Right cardiac atrium (tissue), 5 donors: ENCODE measurements at regions of chrX and their contacts with region 1.

Region 1: DNA sequence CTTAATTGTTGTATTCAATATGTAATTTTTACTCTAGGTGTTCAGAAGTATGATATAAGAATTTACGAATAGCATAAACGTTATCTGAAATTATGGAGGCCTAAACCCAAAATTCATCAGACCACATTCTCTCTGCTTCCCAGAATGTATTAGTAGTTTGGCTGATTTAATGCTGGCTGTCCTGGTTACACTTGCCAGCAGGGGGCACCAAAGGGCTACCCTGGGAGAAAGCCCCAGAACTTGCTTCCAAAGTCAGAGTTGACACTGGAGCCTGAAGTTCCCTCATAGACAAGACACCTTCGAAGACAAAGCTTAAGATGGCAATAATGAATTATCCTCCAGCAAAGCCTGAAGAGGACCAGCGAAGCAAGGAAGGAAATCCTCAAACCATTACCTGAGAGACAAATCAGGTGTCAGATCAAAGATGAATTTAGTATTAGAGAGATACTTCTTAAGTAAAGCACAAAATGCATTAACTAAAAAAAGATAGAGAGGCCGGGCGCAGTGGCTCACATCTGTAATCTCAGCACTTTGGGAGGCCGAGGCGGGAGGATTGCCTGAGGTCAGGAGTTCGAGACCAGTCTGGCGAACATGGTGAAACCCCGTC is 11.3 kb upstream of the ANOS1 start:
- DNase-seq: peak; percentile 38 to 75 (median 74)
- ATAC-seq: no peak
- H3K4me3 ChIP-seq: no peak overlapping the region
- H3K27ac ChIP-seq: no peak overlapping the region
- H3K4me1 ChIP-seq: no peaks in the 10 kb centered on the region
- H3K27me3 ChIP-seq: no peaks in the 10 kb centered on the region

Region 2: GRCh38 chrX:7996414-7996813 is 746.8 kb before region 1 on chrX:
- intact Hi-C with region 1: loop called (anchors 5 to 10 kb)
- DNase-seq: no peak
- ATAC-seq: no peak
- H3K4me3 ChIP-seq: no peak overlapping the region
- H3K27ac ChIP-seq: no peak overlapping the region
- H3K4me1 ChIP-seq: peaks cover 1% of the 10 kb centered on the region
- H3K27me3 ChIP-seq: no peaks in the 10 kb centered on the region

Region 3: GRCh38 chrX:8364369-8365141 is 378.7 kb before region 1 on chrX:
- intact Hi-C with region 1: loop called in 1 of 4 experiments (anchors 10 kb)
- DNase-seq: peak in 2 of 3 donors; percentile 16 to 50
- ATAC-seq: no peak
- H3K4me3 ChIP-seq: no peak overlapping the region
- H3K27ac ChIP-seq: no peak overlapping the region
- H3K4me1 ChIP-seq: peaks cover 1% of the 10 kb centered on the region
- H3K27me3 ChIP-seq: no peaks in the 10 kb centered on the region

Region 4: DNA sequence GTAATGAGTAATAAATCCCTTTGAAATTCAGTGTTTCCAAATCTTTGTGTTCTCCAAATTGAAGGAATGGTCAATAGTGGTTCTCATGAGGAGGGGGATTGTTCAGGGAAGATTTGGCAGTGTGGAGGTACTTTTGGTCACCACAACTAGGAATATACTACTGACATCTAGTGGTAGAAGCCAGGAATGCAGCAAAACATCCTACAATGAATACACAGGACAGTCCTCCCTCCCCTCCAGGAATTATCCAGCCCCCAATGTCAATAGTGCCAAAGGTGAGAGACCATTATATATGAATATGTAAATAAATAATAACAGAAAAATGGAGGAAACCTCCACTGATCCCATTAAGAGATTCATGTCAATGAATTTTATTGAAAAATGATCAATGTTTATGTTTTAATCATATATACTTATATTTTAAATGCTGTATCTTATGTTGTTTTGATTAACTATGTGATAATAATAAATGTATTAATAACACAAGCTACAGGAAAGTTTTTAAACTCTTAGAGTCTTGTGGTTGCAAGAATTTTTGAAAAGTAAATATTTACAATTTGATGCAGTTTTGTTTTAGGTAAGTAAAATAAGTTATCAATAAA is 72.3 kb after region 1 on chrX:
- intact Hi-C with region 1: no loop called
- DNase-seq: no peak
- ATAC-seq: no peak
- H3K4me3 ChIP-seq: no peak overlapping the region
- H3K27ac ChIP-seq: no peak overlapping the region
- H3K4me1 ChIP-seq: no peaks in the 10 kb centered on the region
- H3K27me3 ChIP-seq: no peaks in the 10 kb centered on the region